Activated CD8-positive, alpha-beta T cell treated with anti-CD3 and anti-CD28 coated beads, Interleukin-2, amount 10 ng/mL, durations not matched to agents 7 days and 5 days (primary cell): ENCODE measurements at regions of chr16 and their contacts with region 1.

Region 1: DNA sequence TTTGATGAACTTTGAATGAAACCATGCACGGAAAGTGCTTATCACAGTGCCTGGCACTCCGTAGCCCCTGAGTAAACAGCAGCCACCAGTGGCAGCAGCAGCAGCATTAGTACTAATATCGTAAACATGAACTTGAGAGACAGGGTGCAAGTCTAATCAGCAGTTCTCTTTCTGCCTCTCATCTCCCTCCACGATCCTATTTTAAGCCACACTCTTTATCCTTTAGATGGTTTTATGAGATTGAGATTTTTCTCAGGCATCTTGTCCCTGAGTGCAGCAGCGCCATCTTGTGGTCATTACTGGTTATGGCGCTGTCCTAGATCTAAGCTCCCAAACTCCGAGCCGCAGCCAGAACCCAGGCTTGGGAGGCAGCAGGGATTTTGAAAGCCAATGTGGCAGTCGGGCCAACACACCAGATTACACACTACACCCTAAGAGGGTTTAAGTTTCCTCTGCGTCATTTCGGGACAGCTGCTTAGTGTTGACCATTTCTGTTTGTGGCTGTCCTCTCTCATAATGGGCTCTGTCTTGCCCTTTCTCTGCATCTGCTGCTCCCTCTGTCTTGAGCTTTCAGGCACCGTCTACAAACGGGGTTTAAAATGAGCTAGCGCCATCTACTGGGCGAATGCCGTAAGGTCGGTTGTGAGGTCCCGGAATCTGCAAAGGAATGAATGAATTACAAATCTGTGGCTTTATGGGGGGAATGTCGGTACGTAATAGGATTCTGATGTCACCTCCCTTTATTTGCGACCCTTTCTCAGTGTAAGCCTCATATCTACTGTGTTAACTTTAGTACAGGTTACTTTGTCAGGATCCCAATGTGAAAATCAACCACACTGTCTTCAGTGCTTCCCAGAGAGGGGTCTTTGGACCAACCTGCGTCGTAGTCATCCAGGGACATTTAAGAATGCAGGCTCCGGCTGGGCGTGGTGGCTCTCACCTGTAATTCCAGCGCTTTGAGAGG is 64.5 kb downstream of the CYLD start:
- DNase-seq: peak; percentile 90
- ATAC-seq: peak; percentile 98
- H3K4me3 Mint-ChIP-seq: peak overlapping the region; percentile 72
- H3K27ac Mint-ChIP-seq: peak overlapping the region; percentile 62
- H3K4me1 Mint-ChIP-seq: peaks cover 18% of the 10 kb centered on the region
- H3K27me3 Mint-ChIP-seq: no peaks in the 10 kb centered on the region

Region 2: GRCh38 chr16:50210266-50211038 is 595.9 kb before region 1 on chr16:
- CTCF ChIA-PET with region 1: interaction called, 24 read pairs
- POLR2A ChIA-PET with region 1: no interaction called
- DNase-seq: peak; percentile 80
- ATAC-seq: peak; percentile 95
- H3K4me3 Mint-ChIP-seq: no peak overlapping the region
- H3K27ac Mint-ChIP-seq: peak overlapping the region; percentile 41
- H3K4me1 Mint-ChIP-seq: peaks cover 32% of the 10 kb centered on the region
- H3K27me3 Mint-ChIP-seq: no peaks in the 10 kb centered on the region

Region 3: DNA sequence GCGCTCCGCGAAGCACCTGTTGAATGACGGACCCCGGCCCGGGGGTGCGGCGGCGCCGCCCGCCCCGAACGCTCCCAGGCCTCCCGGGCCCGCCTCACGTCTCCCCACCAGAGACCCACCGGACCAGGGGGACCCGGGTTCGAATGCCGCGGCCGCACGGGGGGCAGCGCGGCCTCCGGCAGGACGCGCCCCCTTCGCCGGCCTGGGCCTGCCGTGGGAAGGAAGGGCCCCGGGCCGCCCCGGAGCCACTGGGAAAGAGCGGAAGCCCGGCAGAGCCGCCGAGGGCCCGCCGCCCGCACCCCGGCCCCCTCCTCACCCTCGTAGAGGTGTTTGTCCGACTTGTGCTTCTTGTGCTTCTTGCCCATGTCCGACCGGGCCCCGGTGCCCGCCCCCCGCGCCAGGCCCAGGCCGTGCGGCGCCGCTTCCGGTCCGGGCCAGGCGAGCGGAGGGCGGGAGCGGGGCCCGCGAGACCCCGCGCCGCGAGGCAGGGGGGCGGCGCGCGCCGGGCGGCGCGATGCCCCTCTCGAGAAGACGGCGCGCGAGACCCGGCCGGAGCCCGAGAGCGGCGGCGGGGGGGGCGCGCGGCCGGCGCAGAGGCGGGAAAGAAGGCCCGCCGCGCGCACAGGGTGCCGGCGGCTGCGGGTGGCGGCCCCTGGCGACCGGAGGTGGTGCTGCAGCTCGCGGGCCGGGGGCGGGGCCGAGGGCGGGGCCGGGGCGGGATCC is 437.8 kb before region 1 on chr16 and contains the start of gene BRD7:
- CTCF ChIA-PET with region 1: interaction called, 14 read pairs
- POLR2A ChIA-PET with region 1: no interaction called
- DNase-seq: peak; percentile 69
- ATAC-seq: peak; percentile 84
- H3K4me3 Mint-ChIP-seq: peak within 1 kb of the TSS; percentile 82
- H3K27ac Mint-ChIP-seq: peak within 1 kb of the TSS; percentile 93
- H3K4me1 Mint-ChIP-seq: peaks cover 41% of the 10 kb centered on the region
- H3K27me3 Mint-ChIP-seq: peaks cover 2% of the 10 kb centered on the region
- total RNA-seq, gene BRD7: 88.9 to 90.4 TPM

Region 4: DNA sequence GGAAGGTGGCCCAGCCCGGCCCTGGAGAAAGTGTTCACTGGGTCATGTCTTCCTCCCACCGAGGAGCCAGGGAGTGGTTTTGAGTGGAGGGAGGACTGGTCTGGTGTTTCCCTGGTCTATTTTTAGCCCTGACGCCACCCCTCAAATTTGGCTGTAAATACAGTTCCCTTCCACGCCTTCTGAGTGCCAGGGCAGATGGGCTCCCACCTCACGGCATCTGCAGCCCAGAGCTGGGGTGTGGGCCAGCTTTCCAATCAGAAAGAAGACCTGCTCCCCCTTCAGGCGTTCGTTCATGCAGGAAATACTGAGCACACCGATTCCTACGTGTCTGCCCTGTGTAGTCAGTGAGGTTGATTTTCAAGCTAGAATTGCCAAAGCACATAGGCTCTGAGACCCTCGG is 179.0 kb before region 1 on chr16:
- CTCF ChIA-PET with region 1: interaction called, 10 read pairs
- POLR2A ChIA-PET with region 1: no interaction called
- DNase-seq: peak; percentile 51
- ATAC-seq: peak; percentile 72
- H3K4me3 Mint-ChIP-seq: peak overlapping the region; percentile 13
- H3K27ac Mint-ChIP-seq: peak overlapping the region; percentile 70
- H3K4me1 Mint-ChIP-seq: peaks cover 19% of the 10 kb centered on the region
- H3K27me3 Mint-ChIP-seq: no peaks in the 10 kb centered on the region

Region 5: GRCh38 chr16:50719518-50720337 is 86.7 kb before region 1 on chr16:
- CTCF ChIA-PET with region 1: interaction called, 10 read pairs
- POLR2A ChIA-PET with region 1: no interaction called
- DNase-seq: peak; percentile 38
- ATAC-seq: peak; percentile 73
- H3K4me3 Mint-ChIP-seq: no peak overlapping the region
- H3K27ac Mint-ChIP-seq: peak overlapping the region; percentile 75
- H3K4me1 Mint-ChIP-seq: peaks cover 45% of the 10 kb centered on the region
- H3K27me3 Mint-ChIP-seq: no peaks in the 10 kb centered on the region

Region 6: DNA sequence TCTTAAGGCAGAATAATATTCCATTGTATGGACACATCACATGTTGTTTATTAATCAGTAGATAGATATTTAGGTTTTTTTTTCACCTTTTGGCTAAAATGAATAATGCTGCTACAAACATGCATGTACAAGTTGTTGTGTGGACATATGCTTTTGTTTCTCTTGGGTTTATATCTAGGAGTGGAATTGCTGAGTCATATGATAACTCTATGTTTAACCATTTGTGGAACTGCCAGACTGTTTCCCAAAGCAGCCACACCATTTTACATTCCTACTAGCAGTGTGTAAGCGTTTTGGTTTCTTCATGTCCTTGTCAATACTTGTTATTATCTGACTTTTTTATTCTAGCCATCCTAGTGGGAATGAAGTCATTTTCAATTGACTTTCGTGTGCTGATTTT is 43.2 kb before region 1 on chr16:
- CTCF ChIA-PET with region 1: interaction called, 21 read pairs
- POLR2A ChIA-PET with region 1: no interaction called
- DNase-seq: no peak
- ATAC-seq: no peak
- H3K4me3 Mint-ChIP-seq: no peak overlapping the region
- H3K27ac Mint-ChIP-seq: no peak overlapping the region
- H3K4me1 Mint-ChIP-seq: peaks cover 57% of the 10 kb centered on the region
- H3K27me3 Mint-ChIP-seq: no peaks in the 10 kb centered on the region

Region 7: DNA sequence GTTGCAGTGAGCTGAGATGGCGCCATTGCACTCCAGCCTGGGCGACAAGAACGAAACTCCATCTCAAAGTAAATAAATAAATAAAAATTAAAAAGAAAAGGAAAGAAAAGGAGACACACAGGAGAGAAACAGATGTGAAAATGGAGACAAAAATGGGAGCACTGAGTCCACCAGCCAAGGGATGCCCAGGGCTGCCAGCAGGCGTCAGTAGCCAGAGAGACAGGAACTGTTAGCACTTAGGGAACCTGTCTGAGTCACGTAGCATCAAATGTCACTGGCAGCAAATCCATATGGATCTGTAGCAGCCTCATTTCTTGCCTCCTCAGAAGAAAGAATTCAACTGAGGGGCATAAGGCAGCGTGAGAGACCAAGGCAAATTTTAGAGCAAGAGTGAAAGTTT is 15.2 kb after region 1 on chr16:
- CTCF ChIA-PET with region 1: interaction called, 14 read pairs
- POLR2A ChIA-PET with region 1: interaction called, 3 read pairs
- DNase-seq: no peak
- ATAC-seq: no peak
- H3K4me3 Mint-ChIP-seq: no peak overlapping the region
- H3K27ac Mint-ChIP-seq: no peak overlapping the region
- H3K4me1 Mint-ChIP-seq: no peaks in the 10 kb centered on the region
- H3K27me3 Mint-ChIP-seq: peaks cover 10% of the 10 kb centered on the region

Region 8: GRCh38 chr16:50940275-50940854 is 134.0 kb after region 1 on chr16:
- CTCF ChIA-PET with region 1: no interaction called
- POLR2A ChIA-PET with region 1: no interaction called
- DNase-seq: no peak
- ATAC-seq: no peak
- H3K4me3 Mint-ChIP-seq: no peak overlapping the region
- H3K27ac Mint-ChIP-seq: no peak overlapping the region
- H3K4me1 Mint-ChIP-seq: no peaks in the 10 kb centered on the region
- H3K27me3 Mint-ChIP-seq: no peaks in the 10 kb centered on the region